ENCODE measurements at regions of chr1 and their contacts with region 1.

Region 1: GRCh38 chr1:160291248-160292220 is 6.6 kb upstream of the PEX19 start:
- DNase-seq: peak; percentile 27 to 87 (median 66)
- ATAC-seq: peak; percentile 99
- H3K4me3 ChIP-seq: no peak overlapping the region
- H3K4me3 Mint-ChIP-seq: no peak overlapping the region
- H3K27ac ChIP-seq: no peak overlapping the region
- H3K27ac Mint-ChIP-seq: peak overlapping the region; percentile 23
- H3K4me1 ChIP-seq: peaks cover 4% of the 10 kb centered on the region
- H3K4me1 Mint-ChIP-seq: peaks cover 3% of the 10 kb centered on the region
- H3K27me3 ChIP-seq: no peaks in the 10 kb centered on the region
- H3K27me3 Mint-ChIP-seq: no peaks in the 10 kb centered on the region
- CTCF ChIP-seq: peak; percentile 78

Region 2: GRCh38 chr1:160108888-160109662 is 182.5 kb before region 1 on chr1:
- CTCF ChIA-PET with region 1: interaction called, 102 read pairs
- POLR2A ChIA-PET with region 1: no interaction called
- intact Hi-C with region 1: no loop called
- DNase-seq: peak in 4 of 9 experiments; percentile 29 to 63 (median 53)
- ATAC-seq: peak; percentile 74
- H3K4me3 ChIP-seq: no peak overlapping the region
- H3K4me3 Mint-ChIP-seq: no peak overlapping the region
- H3K27ac ChIP-seq: no peak overlapping the region
- H3K27ac Mint-ChIP-seq: no peak overlapping the region
- H3K4me1 ChIP-seq: no peaks in the 10 kb centered on the region
- H3K4me1 Mint-ChIP-seq: no peaks in the 10 kb centered on the region
- H3K27me3 ChIP-seq: no peaks in the 10 kb centered on the region
- H3K27me3 Mint-ChIP-seq: peaks cover 8% of the 10 kb centered on the region
- CTCF ChIP-seq: peak; percentile 35

Region 3: GRCh38 chr1:160205242-160206035 is 86.1 kb before region 1 on chr1 and contains the start of gene PEA15:
- CTCF ChIA-PET with region 1: interaction called, 10 read pairs
- POLR2A ChIA-PET with region 1: interaction called, 3 read pairs
- intact Hi-C with region 1: no loop called
- DNase-seq: peak; percentile 19 to 80 (median 66)
- ATAC-seq: peak; percentile 70
- H3K4me3 ChIP-seq: peak within 1 kb of the TSS; percentile 69 to 89
- H3K4me3 Mint-ChIP-seq: peak within 1 kb of the TSS; percentile 90
- H3K27ac ChIP-seq: peak within 1 kb of the TSS; percentile 57 to 83
- H3K27ac Mint-ChIP-seq: peak within 1 kb of the TSS; percentile 89
- H3K4me1 ChIP-seq: peaks cover 19% of the 10 kb centered on the region
- H3K4me1 Mint-ChIP-seq: peaks cover 36% of the 10 kb centered on the region
- H3K27me3 ChIP-seq: no peaks in the 10 kb centered on the region
- H3K27me3 Mint-ChIP-seq: no peaks in the 10 kb centered on the region
- CTCF ChIP-seq: no peak
- total RNA-seq, gene PEA15: 9.1 to 10.9 TPM

Region 4: DNA sequence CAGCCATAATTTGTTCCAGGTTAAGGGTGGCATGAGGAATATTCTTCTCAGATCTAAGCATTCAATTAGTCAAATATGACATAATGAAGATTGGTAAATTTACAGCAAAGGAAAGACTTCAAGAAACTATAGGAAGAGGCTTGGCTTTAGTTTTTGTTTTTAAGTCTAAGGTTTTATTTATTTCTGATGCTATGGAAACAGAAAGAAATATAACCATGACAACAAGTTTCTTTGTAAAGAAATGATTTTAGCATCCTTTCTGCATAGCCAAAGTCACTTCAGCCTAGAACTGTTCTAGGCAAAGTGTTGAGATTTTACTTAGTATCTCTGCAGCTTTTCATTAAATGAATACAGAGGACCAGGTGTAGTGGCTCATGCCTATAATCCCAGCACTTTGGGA is 58.6 kb before region 1 on chr1:
- CTCF ChIA-PET with region 1: interaction called, 11 read pairs
- POLR2A ChIA-PET with region 1: no interaction called
- intact Hi-C with region 1: no loop called
- DNase-seq: peak in 1 of 9 experiments; percentile 19
- ATAC-seq: no peak
- H3K4me3 ChIP-seq: no peak overlapping the region
- H3K4me3 Mint-ChIP-seq: no peak overlapping the region
- H3K27ac ChIP-seq: no peak overlapping the region
- H3K27ac Mint-ChIP-seq: no peak overlapping the region
- H3K4me1 ChIP-seq: no peaks in the 10 kb centered on the region
- H3K4me1 Mint-ChIP-seq: peaks cover 13% of the 10 kb centered on the region
- H3K27me3 ChIP-seq: no peaks in the 10 kb centered on the region
- H3K27me3 Mint-ChIP-seq: no peaks in the 10 kb centered on the region
- CTCF ChIP-seq: no peak

Region 5: GRCh38 chr1:160251687-160252526 is 39.6 kb before region 1 on chr1:
- CTCF ChIA-PET with region 1: interaction called, 44 read pairs
- POLR2A ChIA-PET with region 1: no interaction called
- intact Hi-C with region 1: loop called in 1 of 2 experiments (anchors 5 kb)
- DNase-seq: peak; percentile 17 to 76 (median 57)
- ATAC-seq: peak; percentile 99
- H3K4me3 ChIP-seq: no peak overlapping the region
- H3K4me3 Mint-ChIP-seq: no peak overlapping the region
- H3K27ac ChIP-seq: no peak overlapping the region
- H3K27ac Mint-ChIP-seq: peak overlapping the region; percentile 80
- H3K4me1 ChIP-seq: no peaks in the 10 kb centered on the region
- H3K4me1 Mint-ChIP-seq: peaks cover 23% of the 10 kb centered on the region
- H3K27me3 ChIP-seq: no peaks in the 10 kb centered on the region
- H3K27me3 Mint-ChIP-seq: no peaks in the 10 kb centered on the region
- CTCF ChIP-seq: peak; percentile 64

Region 6: GRCh38 chr1:160307118-160307854 is 15.8 kb after region 1 on chr1:
- CTCF ChIA-PET with region 1: interaction called, 34 read pairs
- POLR2A ChIA-PET with region 1: interaction called, 3 read pairs
- intact Hi-C with region 1: no loop called
- DNase-seq: no peak
- ATAC-seq: no peak
- H3K4me3 ChIP-seq: no peak overlapping the region
- H3K4me3 Mint-ChIP-seq: no peak overlapping the region
- H3K27ac ChIP-seq: no peak overlapping the region
- H3K27ac Mint-ChIP-seq: no peak overlapping the region
- H3K4me1 ChIP-seq: no peaks in the 10 kb centered on the region
- H3K4me1 Mint-ChIP-seq: no peaks in the 10 kb centered on the region
- H3K27me3 ChIP-seq: no peaks in the 10 kb centered on the region
- H3K27me3 Mint-ChIP-seq: no peaks in the 10 kb centered on the region
- CTCF ChIP-seq: no peak

Region 7: DNA sequence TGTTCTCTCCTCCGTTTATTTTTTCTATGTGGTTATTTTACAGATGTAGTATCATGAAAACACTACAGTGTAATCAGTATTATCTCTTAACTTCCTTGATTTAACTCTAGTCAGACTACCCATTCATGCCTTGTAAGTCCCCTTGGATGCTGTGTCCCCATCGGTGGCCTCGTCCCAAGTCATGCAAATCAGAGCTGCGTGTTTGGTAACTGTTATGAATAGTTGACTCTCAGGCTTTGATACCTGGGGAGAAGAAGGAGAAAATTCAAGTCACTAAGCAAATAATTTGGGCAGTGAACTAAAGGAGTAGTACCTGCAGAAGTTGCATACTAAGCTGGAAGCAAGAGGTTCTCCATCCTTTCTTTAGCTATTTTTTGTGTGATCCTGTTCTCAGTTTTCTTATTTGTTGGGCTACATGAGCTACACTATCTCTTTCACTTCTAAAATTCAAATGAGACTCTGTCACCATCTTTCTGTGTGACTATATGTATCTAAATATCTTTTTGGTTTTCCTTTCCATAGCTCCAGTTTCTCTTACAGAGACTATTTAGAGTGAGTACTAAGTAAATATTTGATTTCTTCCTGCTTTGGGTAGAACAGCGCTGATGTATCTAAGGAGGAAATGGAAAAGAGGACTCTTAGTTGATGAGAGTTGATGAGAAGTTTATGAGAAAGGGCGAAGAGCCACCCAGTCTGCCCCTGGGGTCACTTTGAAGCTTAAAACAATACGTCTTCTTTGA is 159.8 kb after region 1 on chr1:
- CTCF ChIA-PET with region 1: no interaction called
- POLR2A ChIA-PET with region 1: no interaction called
- intact Hi-C with region 1: no loop called
- DNase-seq: no peak
- ATAC-seq: no peak
- H3K4me3 ChIP-seq: no peak overlapping the region
- H3K4me3 Mint-ChIP-seq: peak overlapping the region; percentile 15
- H3K27ac ChIP-seq: no peak overlapping the region
- H3K27ac Mint-ChIP-seq: peak overlapping the region; percentile 13
- H3K4me1 ChIP-seq: peaks cover 23% of the 10 kb centered on the region
- H3K4me1 Mint-ChIP-seq: peaks cover 58% of the 10 kb centered on the region
- H3K27me3 ChIP-seq: no peaks in the 10 kb centered on the region
- H3K27me3 Mint-ChIP-seq: no peaks in the 10 kb centered on the region
- CTCF ChIP-seq: no peak

Region 8: GRCh38 chr1:160681067-160681890 is 389.7 kb after region 1 on chr1:
- CTCF ChIA-PET with region 1: no interaction called
- POLR2A ChIA-PET with region 1: no interaction called
- intact Hi-C with region 1: no loop called
- DNase-seq: peak; percentile 75 to 93 (median 91)
- ATAC-seq: peak; percentile 91
- H3K4me3 ChIP-seq: no peak overlapping the region
- H3K4me3 Mint-ChIP-seq: no peak overlapping the region
- H3K27ac ChIP-seq: peak overlapping the region; percentile 1 to 71
- H3K27ac Mint-ChIP-seq: peak overlapping the region; percentile 85
- H3K4me1 ChIP-seq: peaks cover 52% of the 10 kb centered on the region
- H3K4me1 Mint-ChIP-seq: peaks cover 54% of the 10 kb centered on the region
- H3K27me3 ChIP-seq: no peaks in the 10 kb centered on the region
- H3K27me3 Mint-ChIP-seq: no peaks in the 10 kb centered on the region
- CTCF ChIP-seq: peak; percentile 82